AG04449 (cell line): ENCODE measurements at regions of chr12 and their contacts with region 1.

Region 1: DNA sequence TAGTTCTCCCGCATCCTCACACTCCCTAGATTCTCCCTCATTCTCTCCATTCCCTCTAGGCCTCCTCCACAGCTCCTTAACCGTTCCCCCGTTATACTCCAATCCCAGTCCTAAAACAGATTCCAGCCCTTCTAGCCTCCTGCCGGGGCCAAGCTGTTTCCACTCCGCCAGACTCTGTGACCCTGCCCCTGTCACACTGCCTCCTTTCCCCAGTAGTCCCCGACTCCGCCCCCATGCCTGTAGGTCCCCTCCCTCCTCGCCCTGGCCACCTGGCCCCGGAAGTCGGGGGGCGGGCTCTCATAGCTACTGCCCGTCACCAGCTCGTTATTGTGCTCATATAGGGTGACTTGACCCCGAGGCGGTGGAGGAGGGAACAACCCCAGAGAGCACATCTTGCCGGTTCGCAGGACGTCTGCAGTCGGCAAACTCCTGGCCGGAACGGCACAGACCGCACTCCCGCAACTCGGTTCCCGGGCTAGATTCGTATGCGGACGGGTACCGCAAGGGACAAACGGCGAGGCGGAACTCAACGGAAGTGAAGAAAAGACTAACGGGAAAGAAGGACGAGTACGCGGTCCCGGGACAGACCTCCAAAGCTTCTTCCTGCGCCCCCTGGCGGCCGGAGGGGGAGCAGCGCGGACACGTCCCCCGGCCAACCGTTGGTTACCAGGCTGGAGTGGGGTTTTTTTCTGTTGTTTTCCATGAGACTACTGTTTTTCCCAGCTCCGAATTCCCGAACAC is at the start of gene AAAS:
- DNase-seq: peak; percentile 72
- H3K4me3 ChIP-seq: peak within 1 kb of the TSS; percentile 97
- CTCF ChIP-seq: peak; percentile 99

Region 2: GRCh38 chr12:53200458-53201176 is 120.6 kb before region 1 on chr12:
- CTCF ChIA-PET with region 1: interaction called, 18 read pairs
- POLR2A ChIA-PET with region 1: no interaction called
- DNase-seq: no peak
- H3K4me3 ChIP-seq: no peak overlapping the region
- CTCF ChIP-seq: no peak

Region 3: GRCh38 chr12:53267999-53268647 is 53.1 kb before region 1 on chr12 and contains the start of gene ESPL1:
- CTCF ChIA-PET with region 1: interaction called, 34 read pairs
- POLR2A ChIA-PET with region 1: interaction called, 3 read pairs
- DNase-seq: no peak
- H3K4me3 ChIP-seq: peak within 1 kb of the TSS; percentile 95
- CTCF ChIP-seq: peak; percentile 17

Region 4: DNA sequence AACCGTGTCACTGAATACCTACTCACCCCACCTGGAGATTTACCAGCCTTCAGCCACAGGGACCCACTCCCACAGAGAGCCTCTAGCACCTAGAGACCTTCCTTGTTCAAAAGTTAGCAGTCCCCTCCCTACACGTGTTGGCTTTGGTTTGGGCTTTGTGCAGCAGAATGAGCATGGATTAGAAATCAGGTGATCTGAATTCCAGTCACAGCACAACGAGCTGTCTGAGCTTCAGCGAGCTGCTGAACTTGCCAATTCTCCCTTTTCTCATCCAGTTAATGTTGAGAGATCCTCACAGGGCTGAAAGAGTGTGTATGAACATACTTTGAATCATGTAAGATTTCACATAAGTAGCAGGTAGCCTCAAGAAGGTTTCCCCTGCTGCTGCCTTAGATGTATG is 15.7 kb before region 1 on chr12:
- CTCF ChIA-PET with region 1: interaction called, 120 read pairs
- POLR2A ChIA-PET with region 1: interaction called, 4 read pairs
- DNase-seq: no peak
- H3K4me3 ChIP-seq: no peak overlapping the region
- CTCF ChIP-seq: no peak

Region 5: GRCh38 chr12:53414756-53415417 is 93.6 kb after region 1 on chr12:
- CTCF ChIA-PET with region 1: interaction called, 115 read pairs
- POLR2A ChIA-PET with region 1: interaction called, 3 read pairs
- DNase-seq: no peak
- H3K4me3 ChIP-seq: no peak overlapping the region
- CTCF ChIP-seq: no peak

Region 6: GRCh38 chr12:53508534-53509199 is 187.4 kb after region 1 on chr12:
- CTCF ChIA-PET with region 1: interaction called, 135 read pairs
- POLR2A ChIA-PET with region 1: no interaction called
- DNase-seq: no peak
- H3K4me3 ChIP-seq: no peak overlapping the region
- CTCF ChIP-seq: peak; percentile 95